Mammary epithelial cell (primary cell): ENCODE measurements at regions of chr10 and their contacts with region 1.

Region 1: GRCh38 chr10:104903433-104903832 is 262.3 kb downstream of the SORCS3 start:
- DNase-seq: no peak
- H3K4me3 ChIP-seq: no peak overlapping the region
- H3K27ac ChIP-seq: no peak overlapping the region
- H3K4me1 ChIP-seq: no peaks in the 10 kb centered on the region
- H3K27me3 ChIP-seq: no peaks in the 10 kb centered on the region
- CTCF ChIP-seq: no peak

Region 2: DNA sequence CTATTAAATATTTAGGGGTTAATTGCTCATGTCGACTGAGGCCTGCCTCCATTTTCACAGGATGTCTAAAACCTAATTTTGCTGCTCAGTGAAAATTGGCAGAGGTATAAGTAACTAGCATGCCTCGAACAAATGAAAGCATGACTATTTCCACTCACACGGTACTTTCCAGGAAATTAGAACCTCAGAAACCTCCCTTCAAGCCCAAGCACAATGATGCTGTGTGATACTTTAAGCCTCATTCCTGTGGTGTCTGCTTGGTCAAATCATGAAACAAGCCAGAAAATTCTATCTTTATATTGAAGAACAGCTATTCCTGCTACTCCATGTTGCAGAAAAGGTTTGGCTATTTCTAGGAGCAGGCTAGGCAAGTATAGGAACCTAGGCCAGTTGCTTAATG is 59.4 kb before region 1 on chr10:
- CTCF ChIA-PET with region 1: no interaction called
- dilution Hi-C with region 1: loop called (anchors 5 kb)
- in situ Hi-C with region 1: no loop called
- intact Hi-C with region 1: no loop called
- DNase-seq: no peak
- H3K4me3 ChIP-seq: no peak overlapping the region
- H3K27ac ChIP-seq: no peak overlapping the region
- H3K4me1 ChIP-seq: no peaks in the 10 kb centered on the region
- H3K27me3 ChIP-seq: no peaks in the 10 kb centered on the region
- CTCF ChIP-seq: no peak

Region 3: DNA sequence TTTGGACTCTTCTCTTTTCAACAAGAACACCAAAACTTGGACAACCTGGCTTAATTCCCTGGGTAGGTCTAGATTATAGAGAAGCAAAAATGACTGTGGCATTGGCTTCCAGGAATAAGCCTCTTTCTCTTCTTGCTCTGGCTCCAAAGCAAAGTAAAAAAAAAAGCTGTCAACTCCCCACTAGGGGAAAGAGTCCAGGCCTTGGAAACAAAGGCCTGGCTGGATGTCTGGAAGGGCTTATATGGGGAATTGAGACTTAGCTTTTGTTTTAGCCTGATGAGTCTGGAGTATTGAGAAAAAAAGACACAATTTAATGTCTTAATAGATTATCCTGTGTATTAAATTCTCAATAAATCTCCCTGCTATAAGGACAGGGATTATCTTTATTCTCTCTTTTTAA is 38.2 kb after region 1 on chr10:
- CTCF ChIA-PET with region 1: no interaction called
- dilution Hi-C with region 1: no loop called
- in situ Hi-C with region 1: no loop called
- intact Hi-C with region 1: no loop called
- DNase-seq: no peak
- H3K4me3 ChIP-seq: no peak overlapping the region
- H3K27ac ChIP-seq: no peak overlapping the region
- H3K4me1 ChIP-seq: peaks cover 4% of the 10 kb centered on the region
- H3K27me3 ChIP-seq: no peaks in the 10 kb centered on the region
- CTCF ChIP-seq: no peak